A673 (cell line): ENCODE measurements at regions of chr13 and their contacts with region 1.

Region 1: DNA sequence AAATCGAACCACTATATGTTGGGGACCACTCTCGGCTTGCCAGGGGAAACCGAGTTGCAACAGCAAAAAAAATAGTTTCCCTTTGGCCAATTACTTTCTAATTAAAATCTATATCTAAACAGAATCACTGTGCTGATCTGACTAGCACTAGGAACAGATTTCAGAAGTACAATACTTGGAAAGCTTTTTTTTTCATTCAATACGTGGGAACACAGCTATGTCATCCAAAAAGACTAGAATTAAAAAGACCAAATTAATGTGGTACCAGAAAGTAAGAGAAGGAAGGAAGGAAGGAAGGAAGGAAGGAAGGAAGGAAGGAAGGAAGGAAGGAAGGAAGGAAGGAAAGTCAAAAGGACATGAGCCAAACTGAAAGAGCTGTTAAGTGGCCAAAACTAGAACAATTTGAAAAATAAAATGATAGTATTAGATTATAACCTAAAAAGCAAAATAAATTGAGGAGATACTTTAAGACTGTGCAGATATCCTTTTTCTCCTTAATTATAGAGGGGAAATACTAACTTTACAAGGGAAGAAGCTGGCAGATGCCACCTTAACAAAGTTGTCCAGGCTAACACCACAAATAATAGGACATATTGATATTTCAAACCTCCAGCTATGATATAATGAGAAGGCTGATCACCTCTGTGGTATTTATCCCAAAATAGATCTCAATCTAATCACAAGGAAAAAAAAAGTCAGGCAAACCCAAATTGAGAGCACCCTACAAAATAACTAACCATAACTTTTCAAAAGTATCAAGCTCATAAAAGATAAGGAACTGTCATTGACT is 63.9 kb downstream of the DIAPH3 start:
- DNase-seq: peak; percentile 96
- H3K4me3 ChIP-seq: peak overlapping the region; percentile 5
- H3K27ac ChIP-seq: peak overlapping the region; percentile 100
- H3K4me1 ChIP-seq: peaks cover 94% of the 10 kb centered on the region
- H3K27me3 ChIP-seq: no peaks in the 10 kb centered on the region
- CTCF ChIP-seq: no peak

Region 2: GRCh38 chr13:59834801-59835200 is 265.0 kb before region 1 on chr13:
- CTCF ChIA-PET with region 1: interaction called, 7 read pairs
- POLR2A ChIA-PET with region 1: interaction called, 4 read pairs
- intact Hi-C with region 1: loop called (anchors 1 kb)
- DNase-seq: no peak
- H3K4me3 ChIP-seq: no peak overlapping the region
- H3K27ac ChIP-seq: peak overlapping the region; percentile 77
- H3K4me1 ChIP-seq: peaks cover 54% of the 10 kb centered on the region
- H3K27me3 ChIP-seq: no peaks in the 10 kb centered on the region
- CTCF ChIP-seq: no peak

Region 3: DNA sequence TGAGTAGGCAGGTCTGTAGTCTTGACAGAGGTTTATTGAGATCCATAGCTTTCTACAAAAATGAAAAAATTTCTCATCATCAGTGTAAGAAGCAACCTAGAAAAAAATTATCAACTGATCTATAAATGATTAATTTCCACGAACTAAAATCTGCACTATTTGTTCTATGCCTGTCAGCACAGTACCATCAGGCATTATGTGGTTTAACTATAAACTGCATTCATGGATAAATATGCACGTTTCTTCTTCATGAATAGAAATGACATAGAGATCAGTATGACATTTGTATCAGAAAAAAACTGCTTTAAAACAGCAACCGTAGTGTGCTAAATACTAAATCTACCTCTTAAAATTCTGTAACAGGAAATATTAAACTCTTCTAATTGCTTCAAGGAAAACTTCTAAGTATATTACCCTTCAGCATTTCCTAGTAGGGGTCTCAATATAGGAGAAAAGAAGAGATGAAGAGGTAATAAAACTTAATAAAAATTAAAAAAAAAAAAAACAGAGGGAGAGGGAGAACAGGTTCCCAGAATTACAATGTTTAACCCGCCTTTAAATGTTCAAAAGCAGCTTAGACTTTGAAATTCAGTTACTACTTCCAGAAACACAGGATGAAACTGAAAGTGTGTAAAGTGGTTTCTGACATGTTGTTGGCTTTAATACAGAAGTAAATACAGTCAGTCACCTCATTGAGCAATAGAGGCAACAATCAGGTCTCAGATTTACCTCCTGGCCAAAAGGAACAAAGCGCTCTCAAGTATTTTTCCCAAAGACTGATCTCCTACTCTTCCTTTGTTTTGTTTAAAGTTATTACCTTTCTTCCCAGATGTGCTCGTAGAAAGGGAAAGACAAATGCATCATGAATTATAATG is 80.5 kb before region 1 on chr13:
- CTCF ChIA-PET with region 1: no interaction called
- POLR2A ChIA-PET with region 1: no interaction called
- intact Hi-C with region 1: loop called (anchors 1 kb)
- DNase-seq: peak; percentile 83
- H3K4me3 ChIP-seq: peak overlapping the region; percentile 13
- H3K27ac ChIP-seq: peak overlapping the region; percentile 83
- H3K4me1 ChIP-seq: peaks cover 58% of the 10 kb centered on the region
- H3K27me3 ChIP-seq: no peaks in the 10 kb centered on the region
- CTCF ChIP-seq: no peak

Region 4: GRCh38 chr13:60329221-60329983 is 229.6 kb after region 1 on chr13:
- CTCF ChIA-PET with region 1: interaction called, 25 read pairs
- POLR2A ChIA-PET with region 1: interaction called, 11 read pairs
- intact Hi-C with region 1: loop called (anchors 1 kb)
- DNase-seq: peak; percentile 93
- H3K4me3 ChIP-seq: no peak overlapping the region
- H3K27ac ChIP-seq: peak overlapping the region; percentile 91
- H3K4me1 ChIP-seq: peaks cover 58% of the 10 kb centered on the region
- H3K27me3 ChIP-seq: no peaks in the 10 kb centered on the region
- CTCF ChIP-seq: peak; percentile 84

Region 5: GRCh38 chr13:60431108-60431700 is 331.4 kb after region 1 on chr13:
- CTCF ChIA-PET with region 1: interaction called, 8 read pairs
- POLR2A ChIA-PET with region 1: interaction called, 18 read pairs
- intact Hi-C with region 1: loop called (anchors 2 kb)
- DNase-seq: peak; percentile 87
- H3K4me3 ChIP-seq: no peak overlapping the region
- H3K27ac ChIP-seq: peak overlapping the region; percentile 35
- H3K4me1 ChIP-seq: peaks cover 36% of the 10 kb centered on the region
- H3K27me3 ChIP-seq: no peaks in the 10 kb centered on the region
- CTCF ChIP-seq: peak; percentile 86